Activated CD4-positive, alpha-beta memory T cell treated with anti-CD3 and anti-CD28 coated beads, Interleukin-2, amount 10 ng/mL, durations not matched to agents 7 days and 5 days (primary cell): ENCODE measurements at regions of chr15 and their contacts with region 1.

Region 1: DNA sequence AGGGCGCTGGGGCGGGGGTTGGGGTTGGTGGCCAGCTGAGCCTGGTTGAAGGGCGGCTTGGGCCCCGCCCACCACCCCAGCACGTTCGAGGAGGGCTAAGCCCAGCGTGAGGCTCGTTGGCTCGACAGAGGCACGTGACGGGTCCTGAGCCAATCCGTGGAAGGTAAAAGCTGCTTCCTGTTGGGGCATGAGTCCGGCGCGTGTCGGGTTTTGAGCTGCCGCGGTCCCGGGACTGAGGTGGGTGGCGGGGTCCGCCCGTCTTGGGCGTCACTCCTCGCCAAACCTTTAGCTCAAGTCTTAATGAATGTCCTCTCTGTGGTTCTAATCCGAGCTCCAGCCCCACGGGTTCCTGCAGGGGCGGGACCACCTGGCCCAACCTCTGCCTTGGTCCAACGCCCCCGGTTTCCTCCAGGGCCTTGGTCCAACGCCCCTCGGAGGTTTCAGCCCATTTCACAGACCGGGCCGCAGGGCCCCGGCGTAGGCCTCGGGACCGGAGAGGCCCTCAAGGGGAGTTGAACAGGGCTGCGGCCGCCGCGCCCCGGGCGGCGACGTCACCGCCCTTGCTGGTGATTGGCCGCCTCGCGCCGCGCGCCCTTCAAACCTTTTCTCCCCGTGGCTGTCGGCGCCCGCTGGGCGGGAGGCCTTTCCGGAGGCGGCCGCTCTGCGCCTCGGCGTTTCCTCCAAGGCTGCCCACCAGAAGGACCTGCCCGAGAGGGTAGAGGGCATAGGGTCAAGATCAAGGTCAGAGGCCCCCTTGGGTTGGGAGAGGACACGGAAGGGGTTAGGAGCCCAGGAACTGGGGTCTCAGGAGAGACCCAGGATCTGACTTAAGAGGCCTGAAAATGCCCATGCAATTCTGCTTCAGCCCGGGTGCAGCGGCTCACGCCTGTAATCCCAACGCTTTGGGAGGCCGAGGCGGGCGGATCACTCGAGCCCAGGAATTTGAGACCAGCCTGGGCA is at the start of gene RCCD1:
- DNase-seq: peak; percentile 94
- H3K4me3 Mint-ChIP-seq: peak within 1 kb of the TSS; percentile 85
- H3K27ac Mint-ChIP-seq: peak within 1 kb of the TSS; percentile 93
- H3K4me1 Mint-ChIP-seq: peaks cover 31% of the 10 kb centered on the region
- H3K27me3 Mint-ChIP-seq: no peaks in the 10 kb centered on the region
- total RNA-seq, gene RCCD1: 31.3 to 32.8 TPM

Region 2: DNA sequence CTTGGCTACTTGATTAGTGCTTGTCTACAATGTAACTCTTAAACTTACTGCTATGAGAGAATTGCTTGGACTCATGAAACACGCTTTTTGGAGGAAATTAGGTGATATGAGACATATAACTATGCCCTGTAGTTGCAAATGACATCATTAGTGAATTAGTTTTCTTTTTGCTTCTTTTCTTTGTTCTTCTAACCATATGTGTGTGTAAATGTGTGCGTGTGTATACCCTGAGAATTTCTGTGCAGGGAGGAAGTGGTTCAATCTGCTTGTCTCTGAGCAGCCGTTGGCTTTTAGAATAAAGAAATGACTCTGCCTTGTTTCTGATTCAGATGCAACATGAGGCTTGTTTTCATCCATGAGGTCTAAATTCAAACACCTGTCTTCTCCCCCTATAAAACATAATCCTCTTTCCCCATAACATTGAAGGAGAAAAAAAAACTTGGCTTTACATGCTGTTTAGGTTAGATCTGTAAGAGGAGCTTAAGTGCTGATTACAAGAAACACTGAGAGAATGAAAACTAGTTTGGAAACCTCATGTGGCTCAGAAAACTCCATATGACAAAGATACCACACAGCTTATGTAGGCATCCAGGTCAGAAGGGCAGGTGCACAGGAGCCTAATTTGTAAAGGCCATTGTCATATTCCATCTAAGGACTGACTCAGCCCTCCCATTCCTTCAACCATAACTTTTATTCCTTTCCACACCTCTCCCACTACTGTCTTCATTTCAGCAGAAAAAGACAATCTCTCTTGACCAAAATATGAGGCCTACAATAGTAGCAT is 268.4 kb before region 1 on chr15:
- CTCF ChIA-PET with region 1: no interaction called
- POLR2A ChIA-PET with region 1: no interaction called
- DNase-seq: peak; percentile 56
- H3K4me3 Mint-ChIP-seq: peak overlapping the region; percentile 15
- H3K27ac Mint-ChIP-seq: peak overlapping the region; percentile 100
- H3K4me1 Mint-ChIP-seq: peaks cover 54% of the 10 kb centered on the region
- H3K27me3 Mint-ChIP-seq: no peaks in the 10 kb centered on the region

Region 3: GRCh38 chr15:90902040-90902839 is 52.8 kb before region 1 on chr15:
- CTCF ChIA-PET with region 1: interaction called, 9 read pairs
- POLR2A ChIA-PET with region 1: interaction called, 14 read pairs
- DNase-seq: peak; percentile 77
- H3K4me3 Mint-ChIP-seq: peak overlapping the region; percentile 80
- H3K27ac Mint-ChIP-seq: peak overlapping the region; percentile 81
- H3K4me1 Mint-ChIP-seq: peaks cover 40% of the 10 kb centered on the region
- H3K27me3 Mint-ChIP-seq: no peaks in the 10 kb centered on the region

Region 4: DNA sequence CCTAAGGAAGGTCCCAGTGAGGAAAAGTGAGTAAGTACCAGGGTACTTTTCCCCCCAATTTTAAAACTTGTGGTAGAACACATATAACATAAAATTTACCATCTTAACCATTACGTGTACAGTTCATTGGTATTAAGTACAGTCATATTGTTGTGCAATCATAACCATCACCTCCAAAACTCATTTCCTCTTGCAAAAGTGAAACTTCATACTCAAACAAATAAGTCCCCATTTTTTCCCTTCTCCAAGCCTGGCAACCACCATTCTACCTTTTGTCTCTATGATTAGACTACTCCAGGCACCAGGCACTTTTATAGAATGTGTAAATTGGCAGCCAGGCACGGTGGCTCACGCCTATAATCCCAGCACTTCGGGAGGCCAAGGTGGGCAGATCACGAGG is 27.1 kb after region 1 on chr15:
- CTCF ChIA-PET with region 1: interaction called, 16 read pairs
- POLR2A ChIA-PET with region 1: interaction called, 83 read pairs
- DNase-seq: no peak
- H3K4me3 Mint-ChIP-seq: no peak overlapping the region
- H3K27ac Mint-ChIP-seq: peak overlapping the region; percentile 75
- H3K4me1 Mint-ChIP-seq: peaks cover 39% of the 10 kb centered on the region
- H3K27me3 Mint-ChIP-seq: no peaks in the 10 kb centered on the region

Region 5: DNA sequence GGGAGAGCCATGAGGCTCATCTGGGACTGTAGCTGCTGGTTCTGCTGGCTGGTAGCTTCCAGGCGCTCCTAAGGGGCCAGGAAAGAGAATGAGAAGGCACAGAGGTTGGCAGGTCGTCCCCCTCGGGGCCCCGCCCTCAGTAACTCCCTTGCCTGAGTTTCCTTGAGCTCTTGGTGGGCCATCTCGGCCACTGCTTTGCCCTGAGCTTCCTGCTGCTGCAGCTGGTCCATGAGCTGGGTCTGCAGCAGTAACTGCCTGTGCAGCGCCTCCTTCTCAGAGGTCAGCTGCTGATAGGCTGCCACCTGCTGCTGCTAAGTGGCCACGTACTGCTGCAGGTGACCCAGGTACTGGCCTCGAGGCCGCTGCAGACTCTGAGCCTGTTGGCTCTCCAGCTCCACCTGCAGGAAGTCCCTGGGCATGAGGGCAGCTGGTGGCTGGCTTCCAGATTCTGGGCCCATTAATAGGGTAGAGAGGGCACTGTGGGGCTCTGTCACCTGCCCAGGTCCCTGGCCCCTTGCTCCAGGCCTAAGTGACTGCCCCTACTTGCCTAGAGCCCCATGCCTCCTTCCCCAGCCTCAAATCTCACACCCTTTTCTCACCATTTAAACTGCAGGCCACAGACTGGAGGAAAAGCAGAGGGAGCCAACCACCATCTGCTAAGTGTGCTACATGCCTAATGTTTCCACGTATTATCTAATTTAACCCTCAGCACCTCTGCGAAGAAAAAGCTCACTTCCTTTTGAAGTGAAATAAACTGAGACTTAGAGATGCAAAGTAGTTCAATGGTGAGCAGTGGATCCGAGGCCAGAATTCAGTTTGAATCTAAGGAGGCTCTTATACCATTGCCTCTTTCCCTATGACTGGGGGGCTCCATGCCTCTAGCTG is 78.2 kb after region 1 on chr15:
- CTCF ChIA-PET with region 1: interaction called, 15 read pairs
- POLR2A ChIA-PET with region 1: interaction called, 6 read pairs
- DNase-seq: peak; percentile 69
- H3K4me3 Mint-ChIP-seq: no peak overlapping the region
- H3K27ac Mint-ChIP-seq: no peak overlapping the region
- H3K4me1 Mint-ChIP-seq: peaks cover 4% of the 10 kb centered on the region
- H3K27me3 Mint-ChIP-seq: peaks cover 5% of the 10 kb centered on the region

Region 6: GRCh38 chr15:91271565-91272153 is 316.7 kb after region 1 on chr15:
- CTCF ChIA-PET with region 1: interaction called, 16 read pairs
- POLR2A ChIA-PET with region 1: no interaction called
- DNase-seq: peak; percentile 65
- H3K4me3 Mint-ChIP-seq: no peak overlapping the region
- H3K27ac Mint-ChIP-seq: no peak overlapping the region
- H3K4me1 Mint-ChIP-seq: peaks cover 8% of the 10 kb centered on the region
- H3K27me3 Mint-ChIP-seq: peaks cover 23% of the 10 kb centered on the region